ENCODE measurements at regions of chr16 and their contacts with region 1.

Region 1: DNA sequence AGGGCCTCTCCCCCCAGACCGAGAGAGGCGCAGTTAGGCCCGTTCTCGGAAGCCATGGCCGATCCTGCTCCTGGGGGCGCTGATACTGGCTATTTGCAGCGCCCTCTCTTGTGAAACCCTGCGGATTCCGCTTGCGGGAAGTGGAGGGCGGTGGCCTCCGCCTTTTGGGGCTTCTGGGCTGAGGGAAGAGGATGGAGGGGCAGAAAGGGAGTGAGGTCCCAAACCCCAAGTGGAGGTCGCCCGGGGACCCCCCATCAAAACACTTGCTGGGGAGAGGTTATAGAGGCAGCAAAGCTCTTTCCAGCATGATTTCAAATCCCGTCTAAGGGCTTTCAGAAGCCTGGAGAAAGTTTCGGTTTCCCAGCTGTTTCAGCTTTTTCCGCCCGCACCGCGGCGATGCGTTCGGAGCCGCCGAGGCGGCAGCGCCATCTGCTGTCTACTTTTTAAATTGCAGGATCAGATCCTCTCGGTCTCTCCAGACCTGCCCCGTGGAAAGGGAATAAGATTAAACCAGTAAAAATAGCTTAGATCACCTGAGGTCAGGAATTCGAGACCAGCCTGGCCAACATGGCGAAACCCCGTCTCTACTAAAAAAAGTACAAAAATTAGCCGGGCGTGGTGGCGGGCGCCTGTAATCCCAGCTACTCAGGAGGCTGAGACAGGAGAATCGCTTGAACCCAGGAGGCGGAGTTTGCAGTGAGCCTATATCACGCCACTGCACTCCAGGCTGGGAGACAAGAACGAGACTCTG is 15.8 kb downstream of the SNX20 start:
- DNase-seq: no peak
- H3K4me3 ChIP-seq: peak overlapping the region; percentile 58
- CTCF ChIP-seq: peak; percentile 69

Region 2: GRCh38 chr16:50326949-50327402 is 338.3 kb before region 1 on chr16:
- CTCF ChIA-PET with region 1: interaction called, 46 read pairs
- POLR2A ChIA-PET with region 1: no interaction called
- DNase-seq: no peak
- H3K4me3 ChIP-seq: no peak overlapping the region
- CTCF ChIP-seq: peak; percentile 48

Region 3: GRCh38 chr16:50368410-50369132 is 296.7 kb before region 1 on chr16 and contains the start of gene BRD7:
- CTCF ChIA-PET with region 1: interaction called, 86 read pairs
- POLR2A ChIA-PET with region 1: no interaction called
- DNase-seq: no peak
- H3K4me3 ChIP-seq: peak within 1 kb of the TSS; percentile 62
- CTCF ChIP-seq: peak; percentile 54

Region 4: DNA sequence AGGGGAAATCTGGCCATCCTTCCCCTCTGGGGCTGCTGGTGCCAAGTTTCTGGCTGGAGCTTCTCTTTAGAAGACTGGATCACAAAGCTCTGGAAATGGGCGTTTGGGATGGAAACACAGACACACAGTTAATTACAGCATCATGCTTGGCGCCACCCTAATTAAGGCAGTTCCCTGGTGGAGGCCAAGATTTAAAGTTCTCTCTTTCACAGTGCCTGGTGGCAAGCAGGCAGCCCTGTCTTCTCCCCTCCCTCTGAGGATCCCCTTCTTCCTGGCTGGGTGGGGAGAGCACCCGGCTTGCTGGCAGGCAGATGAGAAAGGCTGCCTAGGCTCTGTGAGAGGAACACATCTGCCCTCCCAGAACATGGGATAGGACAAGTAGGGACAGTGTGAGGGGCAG is 176.1 kb before region 1 on chr16:
- CTCF ChIA-PET with region 1: no interaction called
- POLR2A ChIA-PET with region 1: no interaction called
- DNase-seq: no peak
- H3K4me3 ChIP-seq: no peak overlapping the region
- CTCF ChIP-seq: no peak

Region 5: DNA sequence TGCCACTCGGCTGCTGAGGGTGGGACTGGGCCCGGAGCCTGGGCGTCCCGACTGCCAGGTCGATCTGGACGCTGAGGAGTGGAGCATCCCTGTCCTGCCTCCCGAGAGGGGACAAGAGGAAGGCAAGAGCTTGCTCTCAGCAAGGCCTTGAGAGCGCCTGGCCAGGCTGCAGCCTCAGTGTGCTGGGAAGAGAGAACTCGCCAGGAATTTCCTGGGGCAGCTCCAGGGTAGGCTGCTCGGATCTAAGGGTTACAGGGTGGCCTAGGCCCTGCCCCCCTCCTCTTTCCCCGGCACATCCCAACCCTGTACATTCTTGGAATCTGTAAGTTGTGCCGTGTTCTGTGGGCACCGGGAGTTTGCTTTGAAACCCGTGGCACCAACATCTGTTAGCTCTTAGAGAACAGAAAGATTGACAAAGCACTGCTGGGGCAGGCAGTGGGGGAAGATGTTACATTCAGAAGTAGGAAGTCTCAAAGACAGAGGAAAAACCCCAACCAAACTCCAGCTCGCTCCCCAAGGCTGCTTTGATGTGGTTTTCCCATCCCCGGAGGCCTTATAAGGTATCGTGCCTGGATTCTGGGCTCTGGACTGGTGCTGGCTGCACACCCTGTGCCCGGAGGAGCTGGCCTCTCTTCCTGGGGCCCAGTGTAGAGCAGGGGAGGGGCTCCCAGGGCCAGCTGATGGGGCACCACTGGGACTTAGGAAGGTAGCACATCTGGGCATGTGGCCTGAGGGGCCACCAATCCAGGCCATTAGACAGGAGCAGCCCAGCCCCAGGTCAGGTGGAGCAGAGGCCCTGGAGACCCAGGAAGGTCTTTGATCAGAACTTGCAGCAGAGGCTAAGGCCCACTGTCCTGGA is 61.9 kb before region 1 on chr16:
- CTCF ChIA-PET with region 1: interaction called, 31 read pairs
- POLR2A ChIA-PET with region 1: no interaction called
- DNase-seq: no peak
- H3K4me3 ChIP-seq: no peak overlapping the region
- CTCF ChIP-seq: no peak

Region 6: DNA sequence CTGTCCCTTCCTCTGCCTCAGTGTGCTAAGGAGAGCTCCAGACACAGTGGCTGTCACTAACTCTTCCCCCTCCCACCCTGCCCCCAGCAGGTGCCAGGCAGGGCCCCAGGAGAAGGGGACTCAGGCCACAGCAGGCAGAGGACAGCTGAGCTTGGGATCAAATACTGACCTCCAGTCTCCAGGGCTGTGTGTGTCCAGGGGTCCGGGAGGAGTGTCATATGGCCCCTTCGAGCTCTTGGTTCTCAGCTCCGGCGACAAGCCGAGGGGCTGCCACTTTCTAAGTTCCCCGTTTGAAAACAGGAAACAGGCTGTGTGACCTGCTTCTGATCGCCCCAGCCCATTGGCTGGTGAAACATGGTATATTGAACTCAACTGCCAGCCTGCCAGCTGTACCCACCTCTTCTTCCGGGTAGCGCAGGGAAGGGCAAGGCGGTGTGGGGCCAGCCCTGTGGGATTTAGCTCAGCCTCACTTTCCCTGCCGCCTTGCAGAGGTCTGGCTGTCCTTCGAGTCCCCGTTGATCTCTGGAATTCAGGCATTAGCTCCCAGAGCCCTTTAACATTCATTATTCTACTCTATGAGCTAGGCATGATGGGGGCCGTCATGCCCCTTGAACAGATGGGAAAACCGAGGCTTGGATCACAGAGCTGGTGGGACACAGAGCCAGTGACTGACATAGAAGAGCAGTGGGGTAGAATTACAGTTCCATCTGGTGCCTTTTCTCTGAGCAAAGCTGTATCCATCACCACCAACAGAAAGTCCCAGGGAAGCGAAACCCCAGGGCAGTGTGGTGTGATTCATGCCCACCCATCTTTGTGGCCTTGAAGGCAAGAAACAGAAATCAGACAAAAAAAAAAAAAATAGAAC is 15.9 kb after region 1 on chr16 and contains the start of gene SNX20:
- CTCF ChIA-PET with region 1: interaction called, 98 read pairs
- POLR2A ChIA-PET with region 1: no interaction called
- DNase-seq: no peak
- H3K4me3 ChIP-seq: no peak within 1 kb of the TSS
- CTCF ChIP-seq: no peak

Region 7: GRCh38 chr16:50917950-50918703 is 252.8 kb after region 1 on chr16:
- CTCF ChIA-PET with region 1: no interaction called
- POLR2A ChIA-PET with region 1: no interaction called
- DNase-seq: no peak
- H3K4me3 ChIP-seq: no peak overlapping the region
- CTCF ChIP-seq: no peak

Measured in AG04449 (cell line).